T-cell (primary cell): ENCODE measurements at regions of chr6 and their contacts with region 1.

Region 1: GRCh38 chr6:83067448-83068413 is at the start of gene DOP1A:
- DNase-seq: peak; percentile 90 to 98 (median 95)
- ATAC-seq: peak; percentile 88 to 92 (median 90)
- H3K4me3 ChIP-seq: peak within 1 kb of the TSS; percentile 86 to 91
- H3K4me3 Mint-ChIP-seq: peak within 1 kb of the TSS; percentile 90 to 93 (median 91)
- H3K27ac ChIP-seq: peak within 1 kb of the TSS; percentile 82
- H3K27ac Mint-ChIP-seq: peak within 1 kb of the TSS; percentile 88 to 91
- H3K4me1 ChIP-seq: peaks cover 8 to 22% of the 10 kb centered on the region in 2 experiments
- H3K4me1 Mint-ChIP-seq: peaks cover 37 to 63% (median 54%) of the 10 kb centered on the region in 3 donors
- H3K27me3 ChIP-seq: no peaks in the 10 kb centered on the region
- H3K27me3 Mint-ChIP-seq: no peaks in the 10 kb centered on the region
- total RNA-seq, gene DOP1A: 19.0 to 26.8 (median 25.5) TPM

Region 2: DNA sequence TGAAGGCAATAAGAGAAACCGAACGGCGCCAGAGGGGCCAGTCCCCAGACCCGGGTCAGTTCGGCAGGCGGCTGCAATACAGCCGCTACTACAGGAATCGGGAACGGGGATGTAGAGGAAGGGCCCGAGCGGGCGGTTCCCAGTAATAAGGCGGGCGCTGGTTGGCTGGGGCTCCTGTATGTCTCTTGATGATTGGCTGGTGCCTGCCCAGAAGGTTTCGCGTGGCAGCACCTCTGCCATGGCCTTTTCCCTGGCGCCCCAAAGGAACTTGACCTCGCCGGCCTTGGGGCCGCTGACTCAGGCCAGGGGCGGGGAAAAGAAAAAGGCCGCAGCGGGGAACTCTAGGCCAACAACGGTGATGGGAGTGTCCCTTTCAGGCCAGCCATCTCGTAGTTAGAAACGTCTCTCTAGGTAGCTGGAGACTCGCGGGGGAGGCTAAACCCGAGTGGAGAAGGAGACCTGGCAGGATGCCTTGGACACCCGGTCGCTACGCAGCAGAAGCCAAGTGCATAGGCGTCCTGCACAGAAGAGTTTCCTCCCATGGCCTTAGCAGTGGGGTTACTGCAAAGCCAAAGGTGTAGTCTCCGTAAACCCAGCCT is 820.0 kb before region 1 on chr6 and contains the start of gene IBTK:
- CTCF ChIA-PET with region 1: interaction called, 9 to 38 read pairs
- POLR2A ChIA-PET with region 1: interaction called, 3 to 6 read pairs
- DNase-seq: peak; percentile 74 to 95 (median 88)
- ATAC-seq: peak; percentile 89 to 95 (median 92)
- H3K4me3 ChIP-seq: peak within 1 kb of the TSS; percentile 82 to 95
- H3K4me3 Mint-ChIP-seq: peak within 1 kb of the TSS; percentile 95 to 98 (median 97)
- H3K27ac ChIP-seq: peak within 1 kb of the TSS; percentile 83
- H3K27ac Mint-ChIP-seq: peak within 1 kb of the TSS; percentile 93 to 96
- H3K4me1 ChIP-seq: peaks cover 10 to 27% of the 10 kb centered on the region in 2 experiments
- H3K4me1 Mint-ChIP-seq: peaks cover 42 to 44% (median 44%) of the 10 kb centered on the region in 3 donors
- H3K27me3 ChIP-seq: no peaks in the 10 kb centered on the region
- H3K27me3 Mint-ChIP-seq: no peaks in the 10 kb centered on the region
- total RNA-seq, gene IBTK: 19.2 to 21.9 (median 20.7) TPM

Region 3: GRCh38 chr6:83086751-83087150 is 19.0 kb after region 1 on chr6:
- CTCF ChIA-PET with region 1: interaction called, 4 to 20 read pairs
- POLR2A ChIA-PET with region 1: no interaction called
- DNase-seq: no peak
- ATAC-seq: no peak
- H3K4me3 ChIP-seq: no peak overlapping the region
- H3K4me3 Mint-ChIP-seq: no peak overlapping the region
- H3K27ac ChIP-seq: no peak overlapping the region
- H3K27ac Mint-ChIP-seq: no peak overlapping the region
- H3K4me1 ChIP-seq: no peaks in the 10 kb centered on the region
- H3K4me1 Mint-ChIP-seq: peaks cover 29 to 35% (median 30%) of the 10 kb centered on the region in 3 donors
- H3K27me3 ChIP-seq: no peaks in the 10 kb centered on the region
- H3K27me3 Mint-ChIP-seq: no peaks in the 10 kb centered on the region

Region 4: DNA sequence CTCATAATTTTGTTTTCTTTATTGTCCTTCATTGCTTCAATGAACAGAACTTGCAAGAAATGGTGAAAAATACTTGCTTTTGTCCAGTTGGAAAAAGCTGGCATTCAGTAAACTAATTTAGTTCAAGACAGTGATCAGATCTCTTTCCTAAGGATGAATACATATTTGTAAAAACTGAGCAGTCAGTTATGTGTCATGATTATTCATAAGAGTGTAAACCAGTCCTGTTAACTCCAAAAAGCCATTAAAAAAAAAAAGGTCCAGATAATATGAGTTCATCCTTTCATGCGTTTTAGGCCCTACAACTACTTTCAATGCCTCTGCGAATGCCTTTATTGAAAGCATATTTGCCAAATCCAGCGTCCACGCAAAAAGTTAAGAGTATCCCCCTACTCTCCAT is 124.7 kb after region 1 on chr6:
- CTCF ChIA-PET with region 1: interaction called, 8 to 10 read pairs
- POLR2A ChIA-PET with region 1: no interaction called
- DNase-seq: no peak
- ATAC-seq: no peak
- H3K4me3 ChIP-seq: peak overlapping the region; percentile 85 to 87
- H3K4me3 Mint-ChIP-seq: peak overlapping the region; percentile 93 to 98 (median 97)
- H3K27ac ChIP-seq: peak overlapping the region; percentile 52
- H3K27ac Mint-ChIP-seq: peak overlapping the region; percentile 72 to 95
- H3K4me1 ChIP-seq: peaks cover 4 to 15% of the 10 kb centered on the region in 2 experiments
- H3K4me1 Mint-ChIP-seq: peaks cover 44 to 63% (median 57%) of the 10 kb centered on the region in 3 donors
- H3K27me3 ChIP-seq: no peaks in the 10 kb centered on the region
- H3K27me3 Mint-ChIP-seq: no peaks in the 10 kb centered on the region

Region 5: GRCh38 chr6:83514866-83515466 is 447.2 kb after region 1 on chr6:
- CTCF ChIA-PET with region 1: interaction called in 1 of 2 experiments, 11 read pairs
- POLR2A ChIA-PET with region 1: interaction called in 1 of 2 experiments, 4 read pairs
- DNase-seq: peak in 3 of 35 experiments; percentile 4 to 52 (median 18)
- ATAC-seq: no peak
- H3K4me3 ChIP-seq: no peak overlapping the region
- H3K4me3 Mint-ChIP-seq: no peak overlapping the region
- H3K27ac ChIP-seq: no peak overlapping the region
- H3K27ac Mint-ChIP-seq: no peak overlapping the region
- H3K4me1 ChIP-seq: peaks cover 0 to 9% of the 10 kb centered on the region in 2 experiments
- H3K4me1 Mint-ChIP-seq: peaks cover 0 to 14% (median 14%) of the 10 kb centered on the region in 3 donors
- H3K27me3 ChIP-seq: peaks cover 2 to 9% of the 10 kb centered on the region in 2 experiments
- H3K27me3 Mint-ChIP-seq: peaks cover 37 to 41% of the 10 kb centered on the region in 2 donors